ENCODE measurements at regions of chr7 and their contacts with region 1.

Region 1: GRCh38 chr7:55280031-55280454 is 85.1 kb upstream of the LANCL2 start:
- DNase-seq: peak in 40 of 42 donors; percentile 38 to 88 (median 68)

Region 2: DNA sequence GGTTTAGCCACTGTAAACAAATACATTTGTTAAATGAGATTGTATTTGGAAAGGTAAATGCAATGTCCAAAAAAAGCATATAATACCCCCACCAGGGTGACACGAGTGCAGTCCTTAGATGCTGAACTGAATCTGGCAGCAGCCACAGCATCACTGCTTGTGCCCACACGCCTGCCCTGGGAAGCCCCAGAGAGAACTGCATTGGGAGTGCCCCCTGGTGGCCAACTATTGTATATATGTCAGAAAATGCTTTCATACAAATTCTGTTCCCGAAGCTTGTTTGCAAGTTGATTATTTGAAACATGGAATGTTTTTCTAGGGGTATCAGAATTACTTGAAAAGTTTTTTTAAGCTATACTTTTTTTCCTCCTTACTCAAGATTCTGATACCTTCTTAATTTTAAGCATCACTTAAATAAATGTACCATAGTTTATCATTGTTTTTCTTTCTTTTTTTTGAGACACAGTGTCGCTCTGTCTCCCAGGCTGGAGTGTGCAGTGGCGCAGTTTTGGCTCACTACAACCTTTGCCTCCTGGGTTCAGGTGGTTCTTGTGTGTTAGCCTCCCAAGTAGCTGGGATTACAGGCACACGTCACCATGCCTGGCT is 135.2 kb after region 1 on chr7:
- intact Hi-C with region 1: loop called (anchors 2 kb)
- DNase-seq: peak; percentile 74 to 97 (median 88)

Measured in head of caudate nucleus (tissue), 42 donors.